A549 (cell line): ENCODE measurements at regions of chrX and their contacts with region 1.

Region 1: GRCh38 chrX:10119399-10119990 is 37.3 kb upstream of the CLCN4 start:
- DNase-seq: peak; percentile 34 to 92
- ATAC-seq: peak; percentile 61 to 78
- H3K4me3 ChIP-seq: no peak overlapping the region
- H3K27ac ChIP-seq: peak overlapping the region; percentile 54 to 67; a peak in 5 of 6 replicates
- H3K4me1 ChIP-seq: no peaks in the 10 kb centered on the region
- CTCF ChIP-seq: peak; percentile 100
- EP300 ChIP-seq: no peak
- POLR2A ChIP-seq: no peak
- RAD21 ChIP-seq: peak; percentile 100

Region 2: GRCh38 chrX:9942086-9942485 is 177.4 kb before region 1 on chrX:
- CTCF ChIA-PET with region 1: no interaction called
- POLR2A ChIA-PET with region 1: no interaction called
- DNase-seq: no peak
- ATAC-seq: no peak
- H3K4me3 ChIP-seq: no peak overlapping the region
- H3K27ac ChIP-seq: no peak overlapping the region
- H3K4me1 ChIP-seq: no peaks in the 10 kb centered on the region
- CTCF ChIP-seq: no peak
- EP300 ChIP-seq: no peak
- POLR2A ChIP-seq: no peak
- RAD21 ChIP-seq: no peak

Region 3: GRCh38 chrX:9988762-9989161 is 130.7 kb before region 1 on chrX:
- CTCF ChIA-PET with region 1: interaction called, 216 read pairs
- POLR2A ChIA-PET with region 1: no interaction called
- DNase-seq: peak; percentile 24 to 30
- ATAC-seq: peak in 1 of 2 experiments; percentile 35; a peak in 1 of 6 replicates
- H3K4me3 ChIP-seq: no peak overlapping the region
- H3K27ac ChIP-seq: no peak overlapping the region
- H3K4me1 ChIP-seq: no peaks in the 10 kb centered on the region
- CTCF ChIP-seq: peak; percentile 84
- EP300 ChIP-seq: no peak
- POLR2A ChIP-seq: no peak
- RAD21 ChIP-seq: peak; percentile 89 to 90

Region 4: GRCh38 chrX:10007621-10008020 is 111.9 kb before region 1 on chrX:
- CTCF ChIA-PET with region 1: interaction called, 20 read pairs
- POLR2A ChIA-PET with region 1: no interaction called
- DNase-seq: no peak
- ATAC-seq: no peak
- H3K4me3 ChIP-seq: no peak overlapping the region
- H3K27ac ChIP-seq: peak overlapping the region; percentile 29 to 84; a peak in 5 of 6 replicates
- H3K4me1 ChIP-seq: peaks cover 74% of the 10 kb centered on the region
- CTCF ChIP-seq: no peak
- EP300 ChIP-seq: no peak
- POLR2A ChIP-seq: no peak
- RAD21 ChIP-seq: no peak

Region 5: DNA sequence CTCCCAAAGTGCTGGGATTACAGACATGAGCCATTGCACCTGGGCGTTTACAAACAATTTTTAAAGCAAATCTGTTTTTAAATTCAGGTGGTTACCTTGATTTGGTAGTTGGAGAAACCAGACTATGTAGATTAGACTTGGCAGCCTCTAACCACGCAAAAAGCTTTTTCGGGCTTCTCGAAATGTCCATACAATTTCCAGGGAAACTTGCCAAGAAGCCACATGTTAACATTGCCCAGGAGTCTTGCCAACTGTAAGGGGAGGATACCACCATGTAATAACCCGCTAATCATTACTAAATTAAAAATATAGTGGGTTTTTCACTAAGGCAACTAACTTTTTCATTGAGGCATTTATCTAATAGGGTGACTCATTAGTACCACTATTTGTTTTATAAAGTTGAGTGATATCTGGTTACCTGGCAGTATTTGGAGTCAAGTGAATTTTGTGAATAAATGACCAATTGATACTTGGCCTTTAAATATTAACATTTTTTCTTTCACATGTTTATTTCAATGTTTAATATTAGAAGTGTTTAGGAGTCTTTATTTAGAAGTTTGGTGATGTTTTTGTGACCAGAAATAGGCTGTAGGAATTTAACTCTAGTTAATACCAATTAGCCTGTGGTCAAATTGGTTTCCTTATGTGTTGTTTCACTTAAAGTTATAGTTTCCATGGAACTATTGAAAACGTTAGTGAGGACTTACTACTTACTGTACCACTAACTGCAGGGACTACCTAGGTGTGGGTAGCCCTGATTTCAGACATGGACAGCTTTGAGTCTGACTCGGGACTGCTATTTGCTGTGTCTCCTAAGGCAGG is 91.0 kb before region 1 on chrX:
- CTCF ChIA-PET with region 1: interaction called, 18 read pairs
- POLR2A ChIA-PET with region 1: no interaction called
- DNase-seq: no peak
- ATAC-seq: no peak
- H3K4me3 ChIP-seq: no peak overlapping the region
- H3K27ac ChIP-seq: peak overlapping the region; percentile 96 to 98
- H3K4me1 ChIP-seq: peaks cover 73% of the 10 kb centered on the region
- CTCF ChIP-seq: no peak
- EP300 ChIP-seq: no peak
- POLR2A ChIP-seq: no peak
- RAD21 ChIP-seq: no peak

Region 6: DNA sequence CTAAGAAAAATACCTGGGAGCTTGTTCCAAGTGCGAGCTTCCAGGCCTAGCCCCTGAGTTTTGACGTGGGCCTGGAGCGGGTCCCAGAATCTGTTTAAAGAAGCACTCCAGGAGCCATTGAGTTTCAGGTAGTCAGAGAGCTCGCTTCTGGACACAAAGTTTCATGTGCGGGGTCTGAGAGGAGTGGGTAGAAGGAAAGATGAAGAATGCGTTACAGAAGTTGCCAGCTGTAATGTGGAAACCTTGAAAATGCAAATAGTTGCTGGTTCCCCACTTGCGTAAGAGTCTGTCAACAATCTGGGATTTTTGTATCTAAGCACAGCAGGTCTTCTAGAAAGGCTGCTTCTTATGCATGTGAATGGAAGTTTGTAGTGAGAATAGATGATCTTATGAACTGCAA is 40.3 kb before region 1 on chrX:
- CTCF ChIA-PET with region 1: interaction called, 16 read pairs
- POLR2A ChIA-PET with region 1: no interaction called
- DNase-seq: no peak
- ATAC-seq: no peak
- H3K4me3 ChIP-seq: no peak overlapping the region
- H3K27ac ChIP-seq: 0 out of 6 replicates have a peak overlapping the region, but pooled peaks of 1 of the 2 experiments have one; percentile 16
- H3K4me1 ChIP-seq: peaks cover 34% of the 10 kb centered on the region
- CTCF ChIP-seq: no peak
- EP300 ChIP-seq: no peak
- POLR2A ChIP-seq: no peak
- RAD21 ChIP-seq: no peak

Region 7: DNA sequence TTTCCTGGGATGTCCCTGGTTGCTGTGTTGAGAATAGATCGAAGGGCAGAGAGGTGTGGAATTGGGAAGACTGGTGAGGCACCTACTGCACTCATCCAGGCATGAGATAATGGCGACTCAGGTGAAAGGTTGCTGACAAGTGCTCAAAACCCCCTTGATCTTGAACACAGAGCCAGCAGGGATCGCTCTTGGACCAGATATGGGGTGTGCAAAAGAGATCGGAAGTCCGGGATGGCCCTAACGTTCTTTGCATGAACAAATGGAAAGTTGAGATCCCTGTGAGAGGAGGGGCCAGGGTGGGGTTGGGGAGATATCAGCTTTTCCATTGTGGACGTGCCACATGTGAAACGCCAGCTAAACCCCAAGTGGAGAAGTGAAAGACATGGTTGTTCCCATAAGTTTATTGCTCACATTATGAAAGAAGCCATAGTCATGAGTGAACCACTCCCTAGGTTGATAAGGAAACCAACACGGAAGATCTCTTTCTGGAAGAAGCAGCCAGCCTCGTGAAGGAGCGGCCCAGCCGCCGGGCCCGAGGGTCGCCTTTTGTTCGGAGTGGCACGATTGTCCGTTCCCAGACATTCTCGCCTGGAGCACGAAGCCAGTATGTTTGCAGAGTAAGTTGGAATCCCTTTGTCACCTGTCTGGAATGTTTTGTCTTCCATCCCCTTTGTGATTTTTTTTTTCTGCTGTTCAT is 14.6 kb after region 1 on chrX:
- CTCF ChIA-PET with region 1: interaction called, 33 read pairs
- POLR2A ChIA-PET with region 1: no interaction called
- DNase-seq: peak in 1 of 2 experiments; percentile 20
- ATAC-seq: no peak
- H3K4me3 ChIP-seq: no peak overlapping the region
- H3K27ac ChIP-seq: no peak overlapping the region
- H3K4me1 ChIP-seq: no peaks in the 10 kb centered on the region
- CTCF ChIP-seq: no peak
- EP300 ChIP-seq: no peak
- POLR2A ChIP-seq: no peak
- RAD21 ChIP-seq: no peak

Region 8: DNA sequence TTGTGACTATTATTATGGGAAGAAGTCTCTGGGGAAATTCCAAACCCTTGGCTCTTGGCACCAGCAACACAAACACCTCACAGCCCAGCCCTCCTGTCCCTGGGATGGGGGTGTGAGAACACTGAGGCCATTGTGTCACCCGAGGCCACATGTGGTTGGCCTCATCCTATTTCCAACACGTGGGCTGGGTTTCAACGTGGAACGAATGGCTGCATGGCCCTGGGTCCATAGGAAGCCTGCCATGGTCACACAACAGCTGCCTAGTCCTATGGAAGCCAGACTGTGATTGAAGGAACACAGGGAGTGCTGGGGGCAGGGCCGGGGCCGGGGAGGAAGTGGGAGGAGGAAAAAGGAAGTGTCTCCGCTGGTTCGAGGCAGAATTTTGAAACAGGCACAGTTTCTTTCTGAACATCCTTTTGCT is 47.2 kb after region 1 on chrX:
- CTCF ChIA-PET with region 1: interaction called, 11 read pairs
- POLR2A ChIA-PET with region 1: no interaction called
- DNase-seq: no peak
- ATAC-seq: no peak
- H3K4me3 ChIP-seq: no peak overlapping the region
- H3K27ac ChIP-seq: no peak overlapping the region
- H3K4me1 ChIP-seq: no peaks in the 10 kb centered on the region
- CTCF ChIP-seq: no peak
- EP300 ChIP-seq: no peak
- POLR2A ChIP-seq: no peak
- RAD21 ChIP-seq: no peak